Ovary (tissue), 10 donors: ENCODE measurements at regions of chr7 and their contacts with region 1.

Region 1: GRCh38 chr7:155119801-155120382 is 49.8 kb downstream of the HTR5A start:
- DNase-seq: no peak
- H3K4me3 ChIP-seq: no peak overlapping the region
- H3K27ac ChIP-seq: no peak overlapping the region
- H3K4me1 ChIP-seq: no peaks in the 10 kb centered on the region
- H3K27me3 ChIP-seq: no peaks in the 10 kb centered on the region
- CTCF ChIP-seq: no peak
- EP300 ChIP-seq: no peak
- POLR2A ChIP-seq: no peak

Region 2: GRCh38 chr7:155169498-155170065 is 49.7 kb after region 1 on chr7:
- intact Hi-C with region 1: loop called in 1 of 4 experiments (anchors 10 kb)
- DNase-seq: no peak
- H3K4me3 ChIP-seq: no peak overlapping the region
- H3K27ac ChIP-seq: no peak overlapping the region
- H3K4me1 ChIP-seq: no peaks in the 10 kb centered on the region
- H3K27me3 ChIP-seq: no peaks in the 10 kb centered on the region
- CTCF ChIP-seq: no peak
- EP300 ChIP-seq: no peak
- POLR2A ChIP-seq: no peak